HEK293 (cell line): ENCODE measurements at regions of chr17 and their contacts with region 1.

Region 1: DNA sequence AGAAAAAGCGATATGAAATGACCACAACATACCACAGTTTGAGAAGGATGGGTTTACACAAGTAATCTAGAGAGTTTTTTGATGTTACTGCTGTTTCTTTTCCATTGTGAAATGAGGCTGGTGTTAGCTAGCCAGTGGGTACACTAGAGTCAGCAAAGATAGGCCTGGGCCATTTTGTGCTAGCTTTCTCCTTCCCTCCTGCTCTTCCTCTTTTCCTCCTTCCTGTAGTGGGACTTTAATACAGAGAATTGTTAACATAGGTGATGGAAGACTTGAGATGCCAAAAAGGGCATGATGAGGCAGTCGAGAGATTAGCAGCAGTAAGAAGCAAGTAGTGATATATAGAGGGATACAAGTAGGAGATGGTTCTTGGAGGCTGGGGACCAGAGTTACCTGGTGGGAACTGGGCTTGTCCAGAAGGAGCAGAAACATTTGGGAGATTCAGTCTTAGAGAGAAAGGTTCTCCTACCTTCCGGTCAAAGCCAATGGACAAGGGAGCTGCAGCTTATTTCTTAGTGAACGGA is 7.7 kb downstream of the NSRP1 start:
- H3K4me3 ChIP-seq: no peak overlapping the region
- H3K27ac ChIP-seq: no peak overlapping the region
- H3K4me1 ChIP-seq: no peaks in the 10 kb centered on the region
- CTCF ChIP-seq: no peak

Region 2: DNA sequence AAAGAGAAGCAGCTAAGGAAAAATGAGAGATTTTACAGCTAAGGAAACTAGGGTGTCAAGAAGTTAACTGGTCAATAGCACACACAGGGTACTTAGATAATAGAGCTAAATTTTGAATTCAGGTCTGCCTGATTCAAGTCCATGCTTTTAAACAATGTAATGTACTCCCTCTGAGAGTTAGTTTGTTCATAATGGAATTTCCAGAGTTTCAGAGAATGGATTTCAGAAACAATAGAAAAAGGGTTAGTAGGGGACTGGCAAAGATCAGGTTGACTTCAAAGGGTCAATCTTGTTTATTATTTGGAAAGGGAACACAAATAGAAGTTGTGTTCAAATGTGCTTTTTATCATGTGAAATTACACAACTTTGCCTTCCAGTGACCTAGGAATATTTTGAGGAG is 10.2 kb after region 1 on chr17:
- CTCF ChIA-PET with region 1: interaction called, 13 read pairs
- POLR2A ChIA-PET with region 1: no interaction called
- H3K4me3 ChIP-seq: no peak overlapping the region
- H3K27ac ChIP-seq: no peak overlapping the region
- H3K4me1 ChIP-seq: no peaks in the 10 kb centered on the region
- CTCF ChIP-seq: no peak

Region 3: GRCh38 chr17:30170415-30170987 is 46.2 kb after region 1 on chr17:
- CTCF ChIA-PET with region 1: interaction called, 10 read pairs
- POLR2A ChIA-PET with region 1: interaction called, 3 read pairs
- H3K4me3 ChIP-seq: no peak overlapping the region
- H3K27ac ChIP-seq: no peak overlapping the region
- H3K4me1 ChIP-seq: no peaks in the 10 kb centered on the region
- CTCF ChIP-seq: no peak

Region 4: GRCh38 chr17:30278032-30278431 is 153.7 kb after region 1 on chr17:
- CTCF ChIA-PET with region 1: interaction called, 50 read pairs
- POLR2A ChIA-PET with region 1: no interaction called
- H3K4me3 ChIP-seq: no peak overlapping the region
- H3K27ac ChIP-seq: no peak overlapping the region
- H3K4me1 ChIP-seq: no peaks in the 10 kb centered on the region
- CTCF ChIP-seq: no peak

Region 5: DNA sequence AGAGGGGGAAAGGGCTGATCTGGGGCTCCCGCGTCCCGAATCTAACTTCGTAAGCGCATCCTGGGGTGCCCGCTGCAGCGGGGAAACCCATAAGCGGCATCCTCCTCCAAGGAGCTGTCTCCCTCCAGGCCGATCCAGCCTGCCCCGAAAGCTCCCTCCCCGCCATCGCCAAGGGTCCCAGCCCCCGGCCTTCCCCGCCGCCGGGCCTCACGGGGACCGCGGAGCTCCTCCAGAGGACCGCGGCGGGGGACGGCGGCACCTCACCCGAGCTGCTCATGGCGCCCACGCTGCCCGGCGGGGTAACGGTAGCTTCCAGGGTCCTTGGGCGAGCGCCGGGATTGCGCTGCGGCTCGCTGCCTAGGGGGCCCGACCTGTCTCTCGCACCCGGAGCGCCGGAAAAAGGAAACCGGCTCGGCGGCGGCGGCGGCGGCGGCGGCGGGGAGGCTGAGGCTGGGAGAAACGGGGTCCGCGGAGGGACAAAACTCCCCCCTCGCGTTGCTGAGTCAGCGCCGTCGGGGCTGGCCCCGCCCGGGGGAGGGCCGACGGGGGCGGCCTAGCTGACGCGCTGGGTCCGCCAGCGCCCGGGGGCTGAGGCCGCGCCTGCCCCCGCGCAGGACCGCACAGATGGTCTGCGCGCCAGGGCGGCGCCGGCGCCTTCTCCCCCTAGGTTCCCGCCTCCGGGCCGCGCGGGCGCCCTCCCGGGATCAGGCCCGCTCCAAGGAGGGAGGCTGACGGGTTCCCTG is 167.4 kb after region 1 on chr17 and contains the start of gene BLMH:
- CTCF ChIA-PET with region 1: interaction called, 14 read pairs
- POLR2A ChIA-PET with region 1: no interaction called
- H3K4me3 ChIP-seq: peak within 1 kb of the TSS; percentile 88
- H3K27ac ChIP-seq: peak within 1 kb of the TSS; percentile 85
- H3K4me1 ChIP-seq: no peaks in the 10 kb centered on the region; the same call in 1 of the 2 replicates
- CTCF ChIP-seq: no peak